B cell (primary cell): ENCODE measurements at regions of chrX and their contacts with region 1.

Region 1: DNA sequence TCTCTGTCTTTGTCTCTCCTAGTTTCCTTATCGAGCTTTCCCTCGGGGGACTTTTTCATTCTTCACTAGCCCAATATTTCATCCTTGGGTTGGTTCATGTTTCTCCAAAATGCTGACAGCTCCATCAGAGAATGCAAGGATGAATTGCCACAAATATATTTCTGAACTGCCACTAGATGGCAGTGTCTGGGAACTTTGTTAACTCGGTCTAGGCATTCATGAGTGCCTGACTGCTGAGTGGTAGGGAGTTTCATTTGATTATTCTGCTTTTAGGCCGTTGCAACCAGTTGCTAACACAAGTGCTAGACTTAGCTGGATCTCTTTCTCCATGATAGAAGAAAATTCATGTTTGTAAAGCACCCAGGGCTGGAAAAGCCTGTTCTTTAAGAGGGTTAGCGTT is 73.5 kb upstream of the RAP2C start:
- DNase-seq: peak; percentile 60
- ATAC-seq: peak; percentile 36
- H3K4me3 ChIP-seq: no peak overlapping the region
- H3K4me3 Mint-ChIP-seq: no peak overlapping the region
- H3K27ac ChIP-seq: no peak overlapping the region
- H3K27ac Mint-ChIP-seq: no peak overlapping the region
- H3K4me1 ChIP-seq: no peaks in the 10 kb centered on the region
- H3K4me1 Mint-ChIP-seq: no peaks in the 10 kb centered on the region
- H3K27me3 ChIP-seq: no peaks in the 10 kb centered on the region
- H3K27me3 Mint-ChIP-seq: no peaks in the 10 kb centered on the region
- CTCF ChIP-seq: peak; percentile 74

Region 2: DNA sequence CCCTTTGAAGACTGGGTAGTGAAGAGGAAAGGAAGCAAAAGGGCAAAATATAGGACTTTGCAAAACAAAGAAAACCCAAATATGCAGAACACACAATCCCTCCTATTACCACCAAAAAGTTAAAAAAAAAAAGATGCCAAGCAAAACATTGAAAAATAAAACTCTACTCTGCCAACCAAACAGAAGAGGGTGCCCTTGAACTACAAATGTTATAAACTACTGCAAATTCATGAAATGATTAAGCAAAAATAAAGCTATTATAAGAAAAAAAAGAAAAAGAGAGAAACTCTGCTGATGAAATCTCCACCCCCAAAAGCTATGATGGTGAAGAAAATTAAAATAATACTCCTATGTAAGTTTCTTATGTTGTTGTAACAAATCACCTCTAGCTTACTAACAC is 438.2 kb before region 1 on chrX:
- CTCF ChIA-PET with region 1: interaction called, 4 read pairs
- POLR2A ChIA-PET with region 1: no interaction called
- intact Hi-C with region 1: loop called (anchors 5 kb)
- DNase-seq: peak; percentile 31
- ATAC-seq: no peak
- H3K4me3 ChIP-seq: no peak overlapping the region
- H3K4me3 Mint-ChIP-seq: no peak overlapping the region
- H3K27ac ChIP-seq: no peak overlapping the region
- H3K27ac Mint-ChIP-seq: no peak overlapping the region
- H3K4me1 ChIP-seq: no peaks in the 10 kb centered on the region
- H3K4me1 Mint-ChIP-seq: no peaks in the 10 kb centered on the region
- H3K27me3 ChIP-seq: peaks cover 0 to 2% (median 0%) of the 10 kb centered on the region in 4 experiments
- H3K27me3 Mint-ChIP-seq: no peaks in the 10 kb centered on the region
- CTCF ChIP-seq: peak; percentile 34

Region 3: GRCh38 chrX:132219343-132219768 is 73.4 kb before region 1 on chrX and contains the start of gene RAP2C:
- CTCF ChIA-PET with region 1: interaction called, 13 read pairs
- POLR2A ChIA-PET with region 1: no interaction called
- intact Hi-C with region 1: no loop called
- DNase-seq: peak; percentile 73
- ATAC-seq: peak; percentile 26
- H3K4me3 ChIP-seq: peak within 1 kb of the TSS; percentile 58 to 82 (median 66)
- H3K4me3 Mint-ChIP-seq: peak within 1 kb of the TSS; percentile 93
- H3K27ac ChIP-seq: peak within 1 kb of the TSS; percentile 92 to 96
- H3K27ac Mint-ChIP-seq: peak within 1 kb of the TSS; percentile 93
- H3K4me1 ChIP-seq: peaks cover 9 to 18% of the 10 kb centered on the region in 2 donors
- H3K4me1 Mint-ChIP-seq: peaks cover 31% of the 10 kb centered on the region
- H3K27me3 ChIP-seq: no peaks in the 10 kb centered on the region
- H3K27me3 Mint-ChIP-seq: no peaks in the 10 kb centered on the region
- CTCF ChIP-seq: peak; percentile 46
- total RNA-seq, gene RAP2C: 46.0 and 56.0 TPM in 2 replicates

Region 4: DNA sequence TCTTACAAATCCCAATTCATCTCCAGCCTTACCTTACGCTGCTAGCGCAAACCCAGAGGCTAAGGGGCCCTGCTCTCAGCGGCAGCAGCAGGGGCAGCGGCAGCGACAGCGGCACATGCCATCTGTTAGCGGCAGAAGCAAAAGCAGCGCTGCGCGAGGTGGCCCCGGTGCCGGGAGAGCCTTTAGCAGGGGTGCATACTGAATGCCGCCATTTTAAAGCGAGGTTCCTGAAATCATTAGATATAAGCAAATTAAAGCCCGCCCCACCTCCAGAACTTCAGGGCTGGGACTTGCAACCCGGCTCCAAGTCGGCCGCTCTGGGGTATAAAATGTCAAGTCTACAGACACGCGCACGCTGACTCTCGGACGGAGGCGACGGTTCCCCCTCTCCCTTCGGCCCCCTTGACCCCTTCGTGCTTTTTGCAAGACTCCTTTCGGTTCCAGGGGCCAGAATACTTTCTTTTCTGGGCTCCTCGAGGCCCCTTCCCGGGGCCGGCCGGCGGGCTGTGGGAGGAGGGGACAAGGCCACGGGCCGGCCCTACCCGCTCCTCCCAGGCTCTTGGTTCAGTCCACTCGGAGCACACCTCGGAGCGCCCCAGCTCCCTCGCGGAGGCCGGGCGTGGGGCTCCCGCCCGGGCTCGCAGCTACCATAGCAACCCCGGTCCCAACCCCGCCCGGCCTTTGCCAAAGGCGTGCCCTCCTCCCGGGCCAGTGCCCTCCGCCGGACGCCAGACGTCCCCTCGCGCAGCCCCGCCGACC is 196.2 kb after region 1 on chrX and contains the start of gene MBNL3:
- CTCF ChIA-PET with region 1: interaction called, 10 read pairs
- POLR2A ChIA-PET with region 1: no interaction called
- intact Hi-C with region 1: no loop called
- DNase-seq: peak; percentile 87
- ATAC-seq: peak; percentile 67
- H3K4me3 ChIP-seq: peak within 1 kb of the TSS; percentile 61 to 76 (median 66)
- H3K4me3 Mint-ChIP-seq: peak within 1 kb of the TSS; percentile 95
- H3K27ac ChIP-seq: peak within 1 kb of the TSS; percentile 85 to 87
- H3K27ac Mint-ChIP-seq: peak within 1 kb of the TSS; percentile 98
- H3K4me1 ChIP-seq: peaks cover 51 to 53% of the 10 kb centered on the region in 2 donors
- H3K4me1 Mint-ChIP-seq: peaks cover 51% of the 10 kb centered on the region
- H3K27me3 ChIP-seq: no peaks in the 10 kb centered on the region
- H3K27me3 Mint-ChIP-seq: no peaks in the 10 kb centered on the region
- CTCF ChIP-seq: no peak
- total RNA-seq, gene MBNL3: 60.2 and 63.1 TPM in 2 replicates

Region 5: GRCh38 chrX:132615391-132616131 is 322.8 kb after region 1 on chrX:
- CTCF ChIA-PET with region 1: interaction called, 83 read pairs
- POLR2A ChIA-PET with region 1: no interaction called
- intact Hi-C with region 1: loop called (anchors 1 kb)
- DNase-seq: peak; percentile 57
- ATAC-seq: no peak
- H3K4me3 ChIP-seq: no peak overlapping the region
- H3K4me3 Mint-ChIP-seq: no peak overlapping the region
- H3K27ac ChIP-seq: no peak overlapping the region
- H3K27ac Mint-ChIP-seq: no peak overlapping the region
- H3K4me1 ChIP-seq: no peaks in the 10 kb centered on the region
- H3K4me1 Mint-ChIP-seq: no peaks in the 10 kb centered on the region
- H3K27me3 ChIP-seq: no peaks in the 10 kb centered on the region
- H3K27me3 Mint-ChIP-seq: no peaks in the 10 kb centered on the region
- CTCF ChIP-seq: peak; percentile 61